ENCODE measurements at regions of chr20 and their contacts with region 1.

Region 1: DNA sequence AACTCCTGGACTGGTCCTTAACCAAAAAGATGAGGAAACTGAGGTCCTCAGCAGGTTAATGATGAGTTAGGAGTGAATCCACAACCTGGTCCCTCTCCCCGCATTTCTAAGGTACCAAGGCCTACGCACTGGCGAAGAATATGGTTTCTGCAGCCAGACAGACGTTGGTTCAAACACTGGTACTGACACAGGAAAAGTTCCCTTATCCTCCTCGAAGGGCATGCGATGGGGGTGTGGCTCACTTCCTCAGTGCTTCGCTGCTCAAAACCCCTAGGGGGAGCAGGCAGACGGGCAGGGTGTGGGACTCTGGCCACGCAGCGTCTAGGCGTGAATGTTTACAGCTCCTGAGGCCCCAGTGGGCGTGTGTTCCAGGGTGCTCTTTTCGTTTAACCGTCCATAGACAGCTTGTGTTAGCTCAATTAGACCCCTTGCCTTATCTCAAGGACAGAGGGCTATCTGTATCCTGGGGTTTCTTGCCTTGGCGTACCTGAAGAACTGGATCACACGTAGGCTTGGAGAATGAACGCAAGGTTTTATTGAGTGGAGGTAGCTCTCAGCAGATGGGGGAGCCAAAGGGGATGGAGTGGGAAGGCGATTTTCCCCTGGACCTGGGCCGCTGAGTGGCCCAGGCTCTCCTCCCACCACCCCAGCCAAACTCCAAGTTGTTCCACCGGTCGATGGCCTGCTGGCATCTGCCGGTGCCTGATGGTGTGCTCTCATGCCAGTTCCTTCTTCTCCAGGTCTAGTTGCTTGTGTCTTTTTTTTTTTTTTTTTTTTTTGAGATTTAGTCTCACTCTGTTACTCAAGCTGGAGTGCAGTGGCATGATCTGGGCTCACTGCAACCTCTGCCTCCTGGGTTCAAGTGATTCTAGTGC is 31.8 kb upstream of the PTPN1 start:
- H3K4me3 Mint-ChIP-seq: no peak overlapping the region
- H3K27ac Mint-ChIP-seq: peak overlapping the region; percentile 27
- H3K4me1 Mint-ChIP-seq: peaks cover 64% of the 10 kb centered on the region
- H3K27me3 Mint-ChIP-seq: no peaks in the 10 kb centered on the region

Region 2: GRCh38 chr20:50509935-50510705 is 31.7 kb after region 1 on chr20 and contains the start of gene PTPN1:
- intact Hi-C with region 1: loop called (anchors 5 kb)
- H3K4me3 Mint-ChIP-seq: peak within 1 kb of the TSS; percentile 98
- H3K27ac Mint-ChIP-seq: peak within 1 kb of the TSS; percentile 97
- H3K4me1 Mint-ChIP-seq: peaks cover 62% of the 10 kb centered on the region
- H3K27me3 Mint-ChIP-seq: no peaks in the 10 kb centered on the region

Region 3: DNA sequence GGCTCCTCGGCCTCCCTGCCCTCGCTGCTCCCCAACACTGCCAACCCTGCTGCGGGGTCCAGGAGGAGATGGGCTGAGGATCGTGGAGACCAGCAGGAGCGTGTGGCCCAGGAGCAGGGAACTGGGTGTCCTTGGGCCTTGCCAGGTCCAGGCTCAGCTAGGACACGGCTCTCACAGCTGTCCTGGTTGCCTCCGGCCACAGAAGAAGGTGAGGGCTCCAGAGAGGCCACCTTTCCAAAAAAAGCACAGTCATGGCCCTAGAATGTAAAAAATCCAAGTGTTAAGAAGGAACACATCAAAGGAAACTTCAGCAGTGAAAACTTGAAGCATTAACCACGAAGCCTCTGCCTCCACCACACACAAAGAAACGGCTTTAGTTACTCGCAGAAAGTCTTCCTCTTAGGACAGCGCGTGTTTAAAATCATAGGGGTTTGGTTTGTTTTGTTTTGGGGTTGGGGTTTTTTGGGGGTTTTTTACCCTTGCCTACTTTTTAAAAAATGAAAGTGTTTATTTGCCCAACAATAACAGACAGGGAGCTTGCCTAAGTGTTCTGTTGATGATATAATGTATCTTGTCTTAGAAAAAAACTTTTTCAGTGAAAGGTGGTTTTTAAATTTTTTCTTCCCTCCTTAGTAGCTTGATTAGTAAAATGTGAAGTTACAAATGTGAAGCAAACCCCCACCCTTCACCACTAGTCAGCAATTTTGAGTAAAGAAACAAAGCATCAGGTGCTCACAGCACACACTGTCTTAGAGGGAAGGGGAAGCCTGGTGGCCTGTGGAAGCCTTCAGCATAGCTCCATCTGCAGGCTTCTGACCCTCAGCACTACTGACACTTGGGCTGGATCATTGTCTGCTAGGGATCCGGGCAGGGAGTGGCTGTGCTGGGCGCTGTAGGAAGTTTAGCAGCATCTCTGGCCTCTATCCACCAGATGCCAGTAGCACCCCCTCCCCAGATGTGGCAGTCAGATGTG is 91.8 kb after region 1 on chr20:
- intact Hi-C with region 1: loop called (anchors 5 kb)
- H3K4me3 Mint-ChIP-seq: no peak overlapping the region
- H3K27ac Mint-ChIP-seq: peak overlapping the region; percentile 37
- H3K4me1 Mint-ChIP-seq: peaks cover 56% of the 10 kb centered on the region
- H3K27me3 Mint-ChIP-seq: no peaks in the 10 kb centered on the region

Region 4: DNA sequence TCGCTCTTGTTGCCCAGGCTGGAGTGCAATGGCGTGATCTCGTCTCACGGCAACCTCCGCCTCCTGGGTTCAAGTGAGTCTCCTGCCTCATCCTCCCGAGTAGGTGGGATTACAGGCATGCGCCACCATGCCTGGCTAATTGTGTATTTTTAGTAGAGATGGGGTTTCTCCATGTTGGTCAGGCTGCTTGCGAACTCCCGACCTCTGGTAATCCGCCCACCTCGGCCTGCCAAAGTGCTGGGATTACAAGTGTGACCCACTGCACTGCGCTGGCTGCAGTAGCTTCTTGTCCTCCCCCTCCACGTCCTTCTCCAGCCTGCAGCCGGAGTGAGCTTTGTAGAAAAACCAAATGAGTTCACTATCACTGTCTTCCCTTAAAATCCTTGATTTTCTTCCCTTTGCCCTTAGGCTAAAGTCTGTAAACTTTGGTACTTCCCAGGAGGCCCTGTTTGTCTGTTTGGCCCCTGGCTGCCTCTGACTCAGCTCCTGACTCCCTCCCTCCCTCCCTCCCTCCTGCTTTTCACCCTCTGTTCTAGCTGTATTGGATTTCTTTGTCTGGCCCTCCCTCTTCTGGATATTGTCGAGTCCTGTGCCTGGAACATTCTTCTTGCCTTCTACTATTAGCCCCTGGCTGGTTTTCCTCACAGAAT is 265.9 kb after region 1 on chr20:
- intact Hi-C with region 1: no loop called
- H3K4me3 Mint-ChIP-seq: no peak overlapping the region
- H3K27ac Mint-ChIP-seq: no peak overlapping the region
- H3K4me1 Mint-ChIP-seq: peaks cover 6% of the 10 kb centered on the region
- H3K27me3 Mint-ChIP-seq: no peaks in the 10 kb centered on the region